ENCODE measurements at regions of chr13 and their contacts with region 1.

Region 1: DNA sequence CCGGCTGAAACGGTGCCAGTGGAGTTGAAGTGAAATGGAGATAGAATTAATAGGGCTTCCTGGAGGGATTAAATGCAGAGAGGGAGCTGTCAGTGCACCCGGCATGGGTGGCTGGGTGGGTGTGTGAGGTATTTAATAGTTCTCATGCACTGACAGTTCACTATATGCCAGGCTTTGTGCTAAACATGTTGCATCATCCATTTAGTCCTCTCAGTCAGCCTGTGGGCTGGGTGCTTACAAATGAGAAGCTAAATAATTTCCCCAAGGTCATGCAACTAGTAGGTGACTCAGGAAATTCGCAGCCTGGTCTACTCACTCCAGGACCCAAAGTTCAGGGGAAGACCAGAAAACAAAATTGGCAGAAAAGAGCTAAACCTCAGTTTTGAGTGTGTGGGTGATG is 63.5 kb upstream of the SPATA13 start:
- DNase-seq: peak; percentile 67
- ATAC-seq: peak; percentile 90
- H3K4me3 Mint-ChIP-seq: peak overlapping the region; percentile 29
- H3K27ac Mint-ChIP-seq: peak overlapping the region; percentile 72
- H3K4me1 Mint-ChIP-seq: peaks cover 19% of the 10 kb centered on the region
- H3K27me3 Mint-ChIP-seq: peaks cover 5% of the 10 kb centered on the region

Region 2: GRCh38 chr13:23384111-23384510 is 713.0 kb before region 1 on chr13:
- CTCF ChIA-PET with region 1: no interaction called
- POLR2A ChIA-PET with region 1: no interaction called
- intact Hi-C with region 1: loop called in 1 of 2 experiments (anchors 10 kb)
- DNase-seq: peak; percentile 47
- ATAC-seq: peak; percentile 92
- H3K4me3 Mint-ChIP-seq: no peak overlapping the region
- H3K27ac Mint-ChIP-seq: no peak overlapping the region
- H3K4me1 Mint-ChIP-seq: peaks cover 47% of the 10 kb centered on the region
- H3K27me3 Mint-ChIP-seq: no peaks in the 10 kb centered on the region

Region 3: DNA sequence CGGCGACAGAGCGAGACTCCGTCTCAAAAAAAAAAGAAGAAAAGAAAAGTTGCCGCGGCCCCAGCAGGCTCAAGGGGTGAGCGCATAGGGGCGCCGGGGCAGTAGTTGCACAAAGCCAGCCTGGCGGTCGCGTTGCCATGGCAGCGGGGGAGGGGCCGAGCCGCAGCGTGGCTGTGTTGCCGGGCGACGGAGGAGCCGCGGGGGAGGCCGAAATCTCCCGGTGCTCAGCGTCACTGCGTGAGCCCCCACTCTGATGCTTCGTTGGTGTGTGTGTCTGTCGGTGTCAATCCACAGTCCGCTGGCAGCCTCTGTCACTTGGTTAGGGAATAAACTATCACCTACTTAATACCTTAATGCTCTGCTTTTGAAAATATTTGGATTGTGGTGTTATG is 116.9 kb before region 1 on chr13:
- CTCF ChIA-PET with region 1: no interaction called
- POLR2A ChIA-PET with region 1: no interaction called
- intact Hi-C with region 1: loop called in 1 of 2 experiments (anchors 2 kb)
- DNase-seq: peak; percentile 91
- ATAC-seq: peak; percentile 87
- H3K4me3 Mint-ChIP-seq: peak overlapping the region; percentile 65
- H3K27ac Mint-ChIP-seq: no peak overlapping the region
- H3K4me1 Mint-ChIP-seq: peaks cover 10% of the 10 kb centered on the region
- H3K27me3 Mint-ChIP-seq: peaks cover 16% of the 10 kb centered on the region

Region 4: DNA sequence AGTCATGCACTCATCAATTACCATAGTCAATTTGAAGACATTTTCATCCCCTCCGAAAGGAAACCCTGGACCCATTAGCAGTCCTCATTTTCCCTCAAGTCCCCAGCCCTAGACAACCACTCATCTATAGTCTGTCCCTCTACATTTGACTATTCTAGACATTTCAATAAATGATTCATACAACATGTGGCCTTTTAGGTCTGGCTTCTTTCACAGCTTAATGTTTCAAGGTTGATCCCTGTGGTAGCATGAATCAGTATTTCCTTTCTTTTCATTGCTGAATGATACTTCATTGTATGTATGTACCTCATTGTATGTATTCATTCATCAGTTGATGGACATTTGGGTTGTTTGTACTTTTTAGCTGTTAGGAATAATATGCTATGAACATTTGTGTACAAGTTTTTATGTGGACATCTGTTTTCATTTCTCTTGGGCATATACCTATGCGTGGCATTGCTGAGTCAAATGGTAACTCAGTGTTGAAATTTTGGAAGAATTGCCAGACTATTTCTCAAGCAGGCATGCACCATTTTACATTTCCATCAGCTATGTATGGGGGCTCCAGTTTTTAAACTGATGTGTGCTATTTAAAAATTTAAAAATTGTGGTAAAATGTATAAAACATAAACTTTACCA is 81.9 kb after region 1 on chr13:
- CTCF ChIA-PET with region 1: no interaction called
- POLR2A ChIA-PET with region 1: no interaction called
- intact Hi-C with region 1: loop called in 1 of 2 experiments (anchors 5 kb)
- DNase-seq: no peak
- ATAC-seq: peak; percentile 92
- H3K4me3 Mint-ChIP-seq: no peak overlapping the region
- H3K27ac Mint-ChIP-seq: peak overlapping the region; percentile 8
- H3K4me1 Mint-ChIP-seq: peaks cover 31% of the 10 kb centered on the region
- H3K27me3 Mint-ChIP-seq: no peaks in the 10 kb centered on the region

Region 5: GRCh38 chr13:24187185-24187584 is 90.1 kb after region 1 on chr13:
- CTCF ChIA-PET with region 1: no interaction called
- POLR2A ChIA-PET with region 1: no interaction called
- intact Hi-C with region 1: loop called in 1 of 2 experiments (anchors 5 kb)
- DNase-seq: peak; percentile 43
- ATAC-seq: peak; percentile 94
- H3K4me3 Mint-ChIP-seq: no peak overlapping the region
- H3K27ac Mint-ChIP-seq: peak overlapping the region; percentile 10
- H3K4me1 Mint-ChIP-seq: peaks cover 28% of the 10 kb centered on the region
- H3K27me3 Mint-ChIP-seq: no peaks in the 10 kb centered on the region

Region 6: DNA sequence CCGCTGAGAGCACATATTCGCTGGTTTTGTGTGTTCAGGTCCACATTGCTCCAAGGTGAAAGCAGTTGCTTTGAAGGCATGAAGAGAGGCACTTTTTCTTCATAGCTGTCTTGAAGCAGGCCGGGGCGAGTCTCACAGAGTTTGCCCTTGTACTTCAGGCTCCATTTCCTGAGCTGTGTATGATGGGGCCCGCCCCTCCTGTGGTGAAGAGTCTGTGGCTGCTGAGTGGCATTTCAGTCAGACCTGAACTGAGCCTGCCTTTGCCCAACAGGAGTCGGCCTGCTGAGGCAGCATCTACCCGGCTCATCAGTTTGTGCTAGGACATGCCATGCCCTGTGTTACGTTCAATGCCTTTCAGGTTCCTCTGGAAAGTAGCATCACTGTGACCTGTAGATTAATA is 167.9 kb after region 1 on chr13:
- CTCF ChIA-PET with region 1: no interaction called
- POLR2A ChIA-PET with region 1: interaction called, 4 read pairs
- intact Hi-C with region 1: loop called in 1 of 2 experiments (anchors 5 kb)
- DNase-seq: peak; percentile 92
- ATAC-seq: peak; percentile 92
- H3K4me3 Mint-ChIP-seq: peak overlapping the region; percentile 66
- H3K27ac Mint-ChIP-seq: peak overlapping the region; percentile 95
- H3K4me1 Mint-ChIP-seq: peaks cover 92% of the 10 kb centered on the region
- H3K27me3 Mint-ChIP-seq: no peaks in the 10 kb centered on the region

Measured in activated CD4-positive, alpha-beta T cell treated with anti-CD3 and anti-CD28 coated beads for 36 hours (primary cell).